ENCODE measurements at regions of chr1 and their contacts with region 1.

Region 1: DNA sequence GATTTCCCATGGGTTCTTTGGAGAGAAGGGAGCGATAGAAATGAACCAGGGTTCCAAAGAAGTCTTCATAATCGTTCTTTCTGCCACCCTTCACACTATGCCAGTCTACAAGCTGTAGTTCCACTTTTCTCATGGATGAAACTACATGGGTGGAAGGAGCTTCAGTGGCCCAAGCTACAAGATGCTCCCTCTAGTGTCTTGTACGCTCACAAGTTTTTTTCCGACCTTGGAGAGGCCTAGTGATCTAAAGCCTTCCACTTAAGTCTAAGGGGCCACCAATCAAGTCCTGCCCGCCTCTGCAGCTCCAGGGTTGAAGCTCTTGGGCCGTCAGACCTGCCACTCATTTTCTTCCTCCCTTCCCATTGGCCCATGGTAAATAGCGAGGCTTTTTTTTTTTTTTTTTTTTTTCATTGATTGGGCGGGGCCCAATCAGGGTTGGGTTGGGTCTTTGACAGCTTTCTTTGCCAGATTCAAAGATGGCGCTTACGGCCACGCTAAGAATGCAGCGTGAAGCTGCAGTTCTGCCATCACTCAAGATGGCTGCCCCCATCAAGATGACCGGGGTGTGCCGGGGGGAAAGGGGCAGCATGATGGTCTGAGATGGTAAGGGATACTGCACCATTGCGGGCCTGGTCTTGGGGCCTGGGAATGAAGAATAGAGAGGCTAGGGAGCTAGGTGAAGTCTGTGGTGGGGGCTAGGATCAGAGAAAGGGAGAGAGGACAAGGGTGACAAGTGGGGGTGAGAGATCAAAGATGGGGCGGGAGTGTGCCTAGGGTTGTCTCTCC is at the start of gene TOMM40L:
- DNase-seq: peak; percentile 95 to 98
- ATAC-seq: peak; percentile 96 to 98
- H3K4me3 ChIP-seq: peak within 1 kb of the TSS; percentile 62 to 93 (median 87)
- H3K27ac ChIP-seq: peak within 1 kb of the TSS; percentile 76 to 92 (median 90)
- H3K4me1 ChIP-seq: peaks cover 14 to 21% of the 10 kb centered on the region in 2 donors
- H3K27me3 ChIP-seq: no peaks in the 10 kb centered on the region
- CTCF ChIP-seq: peak; percentile 47 to 64 (median 53)
- POLR2A ChIP-seq: peak; percentile 21 to 27
- total RNA-seq, gene TOMM40L: 8.3 to 22.7 (median 16.9) TPM

Region 2: GRCh38 chr1:161082991-161083742 is 142.6 kb before region 1 on chr1:
- in situ Hi-C with region 1: no loop called
- intact Hi-C with region 1: no loop called
- DNase-seq: peak; percentile 61 to 84
- ATAC-seq: peak; percentile 80 to 87
- H3K4me3 ChIP-seq: no peak overlapping the region
- H3K27ac ChIP-seq: no peak overlapping the region
- H3K4me1 ChIP-seq: no peaks in the 10 kb centered on the region
- H3K27me3 ChIP-seq: no peaks in the 10 kb centered on the region
- CTCF ChIP-seq: no peak
- POLR2A ChIP-seq: no peak

Region 3: GRCh38 chr1:161117759-161118581 is 107.8 kb before region 1 on chr1 and contains the starts of genes NIT1 and PFDN2:
- in situ Hi-C with region 1: no loop called
- intact Hi-C with region 1: loop called (anchors 5 kb)
- DNase-seq: peak; percentile 76 to 78
- ATAC-seq: peak; percentile 84 to 86
- H3K4me3 ChIP-seq: peak within 1 kb of the TSS; percentile 83 to 100 (median 99)
- H3K27ac ChIP-seq: peak within 1 kb of the TSS; percentile 90 to 100 (median 98)
- H3K4me1 ChIP-seq: peaks cover 53% of the 10 kb centered on the region in 2 donors
- H3K27me3 ChIP-seq: no peaks in the 10 kb centered on the region
- CTCF ChIP-seq: no peak
- POLR2A ChIP-seq: peak; percentile 91 to 94
- total RNA-seq, gene NIT1: 16.1 to 20.4 (median 17.9) TPM
- total RNA-seq, gene PFDN2: 62.4 to 106 (median 74.1) TPM

Region 4: GRCh38 chr1:161177112-161177935 is 48.4 kb before region 1 on chr1 and contains the start of gene B4GALT3:
- in situ Hi-C with region 1: loop called in 1 of 4 experiments (anchors 10 kb)
- intact Hi-C with region 1: no loop called
- DNase-seq: peak; percentile 84 to 85
- ATAC-seq: peak; percentile 92 to 94
- H3K4me3 ChIP-seq: peak within 1 kb of the TSS; percentile 72 to 92 (median 80)
- H3K27ac ChIP-seq: peak within 1 kb of the TSS; percentile 87 to 91 (median 89)
- H3K4me1 ChIP-seq: peaks cover 18 to 21% of the 10 kb centered on the region in 2 donors
- H3K27me3 ChIP-seq: no peaks in the 10 kb centered on the region
- CTCF ChIP-seq: no peak
- POLR2A ChIP-seq: peak; percentile 90 to 93
- total RNA-seq, gene B4GALT3: 35.5 to 47.7 (median 43.7) TPM

Region 5: DNA sequence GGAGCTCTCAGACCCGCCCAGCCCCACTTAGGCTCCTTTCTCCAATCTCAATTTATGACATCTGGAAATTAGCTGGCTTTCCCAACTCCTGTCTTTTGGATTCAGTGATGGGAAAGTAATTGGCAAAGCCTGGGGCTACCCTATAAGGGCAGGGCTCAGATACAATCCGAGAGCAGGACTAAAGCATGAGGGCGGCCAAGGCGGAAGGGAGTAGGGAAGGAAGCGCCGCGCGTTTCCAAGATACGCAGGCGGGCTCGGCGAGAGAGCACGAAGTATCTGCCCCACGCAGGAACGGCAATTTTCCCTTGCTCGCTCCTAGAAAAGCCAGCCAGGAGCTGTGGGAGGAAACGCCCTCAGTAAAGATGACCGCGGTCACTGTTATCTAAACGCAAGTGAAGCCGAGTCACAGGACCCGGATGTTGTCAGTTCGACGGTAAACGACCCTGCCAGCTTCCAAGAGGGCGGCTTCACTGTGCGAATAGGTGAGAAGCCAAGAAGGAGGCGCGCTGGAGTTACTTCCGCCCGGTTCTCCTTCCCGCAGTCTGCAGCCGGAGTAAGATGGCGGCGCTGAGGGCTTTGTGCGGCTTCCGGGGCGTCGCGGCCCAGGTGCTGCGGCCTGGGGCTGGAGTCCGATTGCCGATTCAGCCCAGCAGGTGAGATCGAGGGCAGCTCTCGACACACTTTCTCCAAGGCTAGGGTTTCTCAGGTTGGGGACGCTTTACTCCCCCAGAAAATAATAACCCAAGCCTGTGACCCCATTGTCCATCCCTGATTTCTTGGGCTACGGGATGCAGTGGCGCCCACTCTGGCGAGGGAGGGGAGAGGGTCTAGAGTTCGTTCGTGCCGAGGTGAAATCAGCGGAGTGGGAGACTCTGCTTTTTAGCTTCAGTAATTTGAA is 23.6 kb before region 1 on chr1 and contains the start of gene NDUFS2:
- in situ Hi-C with region 1: no loop called
- intact Hi-C with region 1: loop called (anchors 2 kb)
- DNase-seq: peak; percentile 99
- ATAC-seq: peak; percentile 97
- H3K4me3 ChIP-seq: peak within 1 kb of the TSS; percentile 66 to 93 (median 84)
- H3K27ac ChIP-seq: peak within 1 kb of the TSS; percentile 94 to 99 (median 98)
- H3K4me1 ChIP-seq: peaks cover 58 to 81% of the 10 kb centered on the region in 2 donors
- H3K27me3 ChIP-seq: no peaks in the 10 kb centered on the region
- CTCF ChIP-seq: peak in 1 of 5 experiments; percentile 18
- POLR2A ChIP-seq: peak; percentile 82 to 86
- total RNA-seq, gene NDUFS2: 206 to 260 (median 226) TPM

Region 6: DNA sequence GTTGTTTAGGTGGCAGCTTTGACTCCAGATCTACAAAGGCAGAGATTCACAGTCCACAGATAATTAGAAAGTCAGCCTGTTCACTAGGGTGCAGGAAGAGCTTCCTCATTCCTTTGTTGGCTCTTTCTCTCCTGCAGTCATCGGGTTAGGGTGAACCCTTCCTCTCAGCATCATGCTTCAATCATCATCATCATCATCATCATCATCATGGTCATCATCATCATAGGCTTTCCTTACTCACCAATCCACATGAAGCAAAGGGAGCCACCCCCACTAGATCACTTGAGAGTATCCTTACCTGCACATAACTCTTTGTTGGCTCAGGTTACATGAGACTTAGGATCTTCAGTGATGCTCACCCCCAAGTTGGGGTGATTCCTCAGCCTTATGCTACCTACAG is 65.1 kb after region 1 on chr1:
- in situ Hi-C with region 1: loop called in 1 of 4 experiments (anchors 10 kb)
- intact Hi-C with region 1: loop called (anchors 2 kb)
- DNase-seq: no peak
- ATAC-seq: no peak
- H3K4me3 ChIP-seq: no peak overlapping the region
- H3K27ac ChIP-seq: no peak overlapping the region
- H3K4me1 ChIP-seq: no peaks in the 10 kb centered on the region
- H3K27me3 ChIP-seq: no peaks in the 10 kb centered on the region
- CTCF ChIP-seq: no peak
- POLR2A ChIP-seq: no peak

Region 7: GRCh38 chr1:161314201-161314981 is 88.7 kb after region 1 on chr1 and contains the start of gene SDHC:
- in situ Hi-C with region 1: loop called in 1 of 4 experiments (anchors 10 kb)
- intact Hi-C with region 1: loop called (anchors 2 kb)
- DNase-seq: peak; percentile 77 to 87
- ATAC-seq: peak; percentile 96 to 97
- H3K4me3 ChIP-seq: peak within 1 kb of the TSS; percentile 75 to 99 (median 93)
- H3K27ac ChIP-seq: peak within 1 kb of the TSS; percentile 95 to 99 (median 96)
- H3K4me1 ChIP-seq: peaks cover 19 to 20% of the 10 kb centered on the region in 2 donors
- H3K27me3 ChIP-seq: no peaks in the 10 kb centered on the region
- CTCF ChIP-seq: peak in 3 of 5 experiments; percentile 14 to 31 (median 22)
- POLR2A ChIP-seq: peak; percentile 82 to 83
- total RNA-seq, gene SDHC: 47.5 to 112 (median 63.8) TPM

Region 8: GRCh38 chr1:161389691-161390558 is 164.2 kb after region 1 on chr1:
- in situ Hi-C with region 1: loop called in 2 of 4 experiments (anchors 5 to 10 kb)
- intact Hi-C with region 1: no loop called
- DNase-seq: peak; percentile 96 to 98
- ATAC-seq: peak; percentile 95 to 97
- H3K4me3 ChIP-seq: peak overlapping the region; percentile 61 to 82 (median 76)
- H3K27ac ChIP-seq: peak overlapping the region; percentile 86 to 95 (median 92)
- H3K4me1 ChIP-seq: peaks cover 9 to 11% of the 10 kb centered on the region in 2 donors
- H3K27me3 ChIP-seq: no peaks in the 10 kb centered on the region
- CTCF ChIP-seq: no peak
- POLR2A ChIP-seq: peak; percentile 78 to 89

Measured in gastrocnemius medialis (tissue), 4 donors.